Activated naive CD4-positive, alpha-beta T cell treated with anti-CD3 and anti-CD28 coated beads for 36 hours (primary cell): ENCODE measurements at regions of chr2 and their contacts with region 1.

Region 1: DNA sequence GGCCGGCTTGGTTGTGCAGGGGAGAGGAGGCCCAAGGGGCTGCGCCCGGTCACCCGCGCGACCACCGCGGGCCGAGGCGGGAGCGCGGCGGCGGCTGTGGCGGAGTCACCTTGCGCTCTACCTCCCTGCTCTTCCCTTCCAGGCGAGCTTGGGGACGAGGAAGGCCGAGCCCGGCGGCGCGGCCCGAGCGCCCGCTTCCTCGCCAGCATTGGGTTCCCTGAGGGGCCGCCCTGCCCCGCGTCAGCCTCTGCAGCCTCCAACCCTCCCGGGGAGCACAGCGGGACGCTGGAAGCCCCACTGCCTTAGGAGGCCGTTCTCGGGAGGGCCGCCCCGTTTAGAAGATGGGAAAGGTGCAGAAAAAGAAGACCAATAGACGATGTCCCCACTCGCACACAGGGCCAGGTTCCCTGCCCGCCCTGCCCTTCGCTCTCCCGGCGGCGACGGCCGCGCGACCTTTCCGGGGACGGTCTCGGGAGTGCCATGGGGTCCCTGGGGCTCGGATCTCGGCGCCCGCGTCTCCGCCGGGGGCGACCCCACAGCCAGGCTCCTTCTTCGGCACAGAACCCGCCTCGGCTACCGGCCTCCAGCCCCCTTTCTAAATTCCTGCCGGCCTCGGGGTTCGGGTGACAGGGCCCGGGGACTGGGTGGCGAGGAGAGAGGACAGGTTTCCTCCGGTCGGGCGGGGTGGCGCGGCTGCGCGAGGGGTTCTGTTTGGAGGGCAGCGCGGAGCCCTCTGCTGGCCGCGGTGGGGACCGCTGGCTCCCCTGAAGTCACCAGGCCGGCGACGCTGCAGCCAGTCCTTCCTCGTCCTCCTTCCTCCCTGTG is 85.5 kb downstream of the HS6ST1 start:
- DNase-seq: peak; percentile 91
- H3K4me3 Mint-ChIP-seq: peak overlapping the region; percentile 71
- H3K27ac Mint-ChIP-seq: no peak overlapping the region
- H3K4me1 Mint-ChIP-seq: peaks cover 4% of the 10 kb centered on the region
- H3K27me3 Mint-ChIP-seq: no peaks in the 10 kb centered on the region

Region 2: GRCh38 chr2:127884436-127885345 is 348.5 kb before region 1 on chr2:
- CTCF ChIA-PET with region 1: no interaction called
- intact Hi-C with region 1: loop called (anchors 2 kb)
- DNase-seq: no peak
- H3K4me3 Mint-ChIP-seq: peak overlapping the region; percentile 86
- H3K27ac Mint-ChIP-seq: peak overlapping the region; percentile 71
- H3K4me1 Mint-ChIP-seq: peaks cover 60% of the 10 kb centered on the region
- H3K27me3 Mint-ChIP-seq: no peaks in the 10 kb centered on the region

Region 3: DNA sequence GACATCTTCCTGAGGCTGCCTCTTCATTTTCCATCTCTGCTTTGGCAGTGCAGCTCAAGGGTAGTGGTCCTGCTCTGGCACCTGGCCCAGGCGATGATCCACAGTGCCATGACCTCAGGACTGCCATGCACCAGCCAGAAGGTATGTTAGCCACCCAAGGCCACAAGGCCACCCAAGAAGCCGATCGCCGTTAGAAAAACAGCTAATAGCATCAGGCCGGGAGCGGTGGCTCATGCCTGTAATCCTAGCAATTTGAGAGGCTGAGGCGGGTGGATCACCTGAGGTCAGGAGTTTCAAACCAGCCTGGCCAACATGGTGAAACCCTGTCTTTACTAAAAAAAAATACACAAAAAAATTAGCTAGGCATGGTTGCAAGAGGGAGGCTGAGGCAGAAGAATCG is 170.6 kb before region 1 on chr2:
- CTCF ChIA-PET with region 1: interaction called, 3 read pairs
- intact Hi-C with region 1: loop called (anchors 1 kb)
- DNase-seq: no peak
- H3K4me3 Mint-ChIP-seq: no peak overlapping the region
- H3K27ac Mint-ChIP-seq: no peak overlapping the region
- H3K4me1 Mint-ChIP-seq: no peaks in the 10 kb centered on the region
- H3K27me3 Mint-ChIP-seq: no peaks in the 10 kb centered on the region

Region 4: DNA sequence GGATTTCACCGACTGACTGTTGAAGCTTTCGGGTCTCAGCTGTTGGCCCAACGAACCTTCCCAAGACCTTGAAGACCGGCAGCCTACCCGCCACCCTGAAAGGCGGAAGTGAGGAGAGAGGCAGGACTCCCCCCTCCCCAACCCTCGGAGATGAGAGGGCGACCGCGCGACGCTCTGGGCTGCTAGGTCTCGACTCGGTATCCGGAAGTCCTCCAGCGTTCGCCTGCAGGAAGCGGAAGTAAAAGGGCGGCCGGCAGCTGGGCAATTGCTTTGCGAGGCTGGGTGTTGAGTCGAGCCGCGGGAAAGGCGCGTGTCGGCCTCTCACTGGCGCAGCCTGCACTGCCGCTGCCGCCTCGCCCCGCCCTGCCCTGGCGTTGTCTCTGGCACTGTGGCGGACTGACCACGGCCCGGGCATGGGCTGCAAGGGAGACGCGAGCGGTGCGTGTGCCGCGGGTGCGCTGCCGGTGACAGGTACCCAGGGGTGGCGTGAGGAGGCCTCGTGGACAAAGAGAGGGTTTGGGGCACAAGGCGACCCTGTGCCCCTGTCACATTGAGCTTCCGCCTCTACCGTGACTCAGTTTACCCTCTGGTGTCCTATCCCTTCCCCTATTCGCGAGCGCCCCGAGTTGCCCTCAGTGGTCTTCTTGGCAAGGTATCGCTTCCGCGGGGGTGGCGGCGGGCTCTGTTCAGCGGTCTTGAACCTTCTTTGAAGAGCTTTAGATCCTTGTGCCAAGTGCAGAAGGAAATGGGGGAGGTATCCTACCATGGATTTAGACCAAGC is 142.0 kb before region 1 on chr2 and contains the start of gene UGGT1:
- CTCF ChIA-PET with region 1: no interaction called
- intact Hi-C with region 1: loop called (anchors 1 kb)
- DNase-seq: peak; percentile 96
- H3K4me3 Mint-ChIP-seq: peak within 1 kb of the TSS; percentile 90
- H3K27ac Mint-ChIP-seq: peak within 1 kb of the TSS; percentile 86
- H3K4me1 Mint-ChIP-seq: peaks cover 42% of the 10 kb centered on the region
- H3K27me3 Mint-ChIP-seq: no peaks in the 10 kb centered on the region
- total RNA-seq, gene UGGT1: 37.3 to 40.1 TPM

Region 5: DNA sequence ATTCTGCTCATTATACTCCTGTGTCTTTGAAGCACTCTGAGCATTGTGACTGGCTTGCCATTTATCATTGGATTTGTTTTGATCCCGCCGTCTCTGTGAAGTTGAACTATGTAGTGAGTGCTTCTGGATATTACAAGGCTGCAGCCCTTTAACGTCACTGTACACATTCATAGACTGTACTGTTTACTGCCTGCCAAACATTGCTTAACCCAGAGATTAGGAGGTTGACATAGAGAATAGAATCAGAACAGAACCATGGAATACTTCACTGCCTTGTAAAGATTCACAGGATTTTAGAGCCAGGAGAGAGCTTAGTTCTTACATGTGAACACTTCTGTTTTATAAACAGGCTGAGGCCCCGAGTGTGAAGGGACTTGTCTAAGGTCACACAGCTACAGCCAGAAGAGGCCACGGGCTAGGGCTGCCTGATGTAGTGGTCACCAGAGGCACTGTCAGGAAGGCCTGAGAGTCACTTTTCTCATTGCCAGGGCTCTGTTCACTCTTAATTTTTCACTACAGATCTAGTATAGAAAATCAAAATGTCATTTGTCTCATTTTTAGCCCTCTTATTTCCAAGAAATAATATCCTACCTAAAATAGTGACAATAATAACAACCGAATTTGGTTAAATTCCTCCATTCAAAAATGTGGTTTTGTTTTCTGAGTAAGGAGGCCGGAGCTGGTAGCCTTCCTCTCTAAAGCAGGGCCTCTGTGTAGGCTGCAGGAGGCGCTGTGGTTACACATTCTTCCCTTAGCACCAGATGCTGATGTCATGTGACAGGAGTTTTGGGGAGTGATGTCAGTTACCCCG is 54.3 kb before region 1 on chr2:
- CTCF ChIA-PET with region 1: interaction called, 3 read pairs
- intact Hi-C with region 1: loop called (anchors 1 kb)
- DNase-seq: peak; percentile 70
- H3K4me3 Mint-ChIP-seq: no peak overlapping the region
- H3K27ac Mint-ChIP-seq: no peak overlapping the region
- H3K4me1 Mint-ChIP-seq: no peaks in the 10 kb centered on the region
- H3K27me3 Mint-ChIP-seq: no peaks in the 10 kb centered on the region

Region 6: DNA sequence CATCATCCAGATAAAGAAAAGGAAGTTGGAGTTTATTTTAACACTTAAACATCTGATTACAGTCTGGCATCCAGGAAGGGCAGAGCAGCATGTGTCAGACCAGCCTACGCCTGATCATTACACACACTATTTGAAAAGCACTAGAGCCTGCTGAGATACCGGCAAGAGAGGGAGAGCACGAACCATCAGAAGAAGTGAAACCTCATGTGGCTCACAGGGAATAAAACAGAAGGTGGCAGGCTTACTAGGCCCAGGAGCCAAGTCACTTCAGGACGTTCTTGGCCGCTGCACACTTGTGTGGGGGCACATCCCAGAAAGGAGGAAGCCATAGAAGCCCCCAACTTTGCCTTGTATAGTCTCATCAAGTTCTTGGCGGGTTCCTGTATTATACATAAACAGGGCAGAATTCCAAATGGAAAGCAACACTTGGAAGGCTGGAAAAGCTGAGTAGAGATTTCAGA is 36.7 kb before region 1 on chr2:
- CTCF ChIA-PET with region 1: interaction called, 3 read pairs
- intact Hi-C with region 1: loop called (anchors 2 kb)
- DNase-seq: peak; percentile 33
- H3K4me3 Mint-ChIP-seq: no peak overlapping the region
- H3K27ac Mint-ChIP-seq: peak overlapping the region; percentile 9
- H3K4me1 Mint-ChIP-seq: peaks cover 33% of the 10 kb centered on the region
- H3K27me3 Mint-ChIP-seq: no peaks in the 10 kb centered on the region